Breast epithelium (tissue), 4 donors: ENCODE measurements at regions of chr11 and their contacts with region 1.

Region 1: DNA sequence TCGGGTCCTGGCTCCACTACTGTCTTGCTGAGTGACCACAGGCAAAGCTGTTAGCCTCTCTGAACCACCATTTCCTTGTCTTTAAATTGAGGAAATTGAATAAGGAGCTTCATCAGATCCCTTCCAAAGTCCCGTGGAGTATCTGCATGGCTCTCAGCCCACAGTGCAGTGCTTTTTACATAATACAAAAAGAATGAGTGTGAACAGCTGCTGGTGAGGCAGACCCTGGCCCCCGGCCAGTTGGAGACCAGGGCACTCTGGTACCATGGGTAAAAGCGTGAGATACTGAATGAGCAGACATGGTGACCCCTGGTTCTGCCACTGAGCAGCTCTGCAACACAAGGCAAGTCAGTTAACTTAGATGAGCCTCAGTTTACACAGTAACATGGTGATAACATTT is 86.8 kb downstream of the GALNT18 start:
- DNase-seq: no peak
- H3K4me3 ChIP-seq: no peak overlapping the region
- H3K27ac ChIP-seq: no peak overlapping the region
- H3K4me1 ChIP-seq: no peaks in the 10 kb centered on the region
- H3K27me3 ChIP-seq: no peaks in the 10 kb centered on the region
- CTCF ChIP-seq: no peak
- POLR2A ChIP-seq: no peak

Region 2: GRCh38 chr11:11519184-11519583 is 15.8 kb before region 1 on chr11:
- intact Hi-C with region 1: loop called (anchors 1 kb)
- DNase-seq: no peak
- H3K4me3 ChIP-seq: no peak overlapping the region
- H3K27ac ChIP-seq: no peak overlapping the region
- H3K4me1 ChIP-seq: no peaks in the 10 kb centered on the region
- H3K27me3 ChIP-seq: no peaks in the 10 kb centered on the region
- CTCF ChIP-seq: no peak
- POLR2A ChIP-seq: no peak